ENCODE measurements at regions of chr9 and their contacts with region 1.

Region 1: DNA sequence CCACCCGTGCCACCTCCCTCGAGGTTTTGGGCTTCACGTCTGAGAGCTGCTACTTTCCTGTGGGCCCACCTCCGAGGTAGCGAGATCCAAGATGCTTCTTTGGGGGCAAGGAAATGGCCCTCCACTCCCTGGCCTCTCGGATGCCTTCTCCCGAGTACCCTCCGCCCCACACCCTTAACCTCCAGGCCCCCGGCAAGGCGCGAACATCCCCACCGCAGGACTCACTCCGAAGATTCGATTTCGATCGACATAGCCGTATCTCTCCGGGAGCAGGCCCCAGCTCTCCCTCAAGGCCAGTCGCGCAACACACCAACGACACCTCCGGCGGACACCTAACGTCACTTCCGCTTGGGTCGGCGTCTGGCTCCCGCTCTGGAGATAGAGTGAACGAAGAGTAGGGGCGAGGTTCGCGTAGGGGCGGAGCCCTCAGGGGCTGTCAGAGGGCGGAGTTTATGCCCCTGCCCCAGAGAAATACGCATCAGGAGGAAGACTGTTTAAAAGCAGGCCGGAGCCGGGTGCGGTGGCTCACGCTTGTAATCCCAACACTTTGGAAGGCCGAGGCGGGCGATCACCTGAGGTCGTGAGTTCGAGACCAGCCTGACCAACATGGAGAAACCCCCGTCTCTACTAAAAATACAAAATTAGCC is at the start of gene SMU1:
- DNase-seq: peak; percentile 69
- H3K4me3 ChIP-seq: peak within 1 kb of the TSS; percentile 98
- CTCF ChIP-seq: no peak

Region 2: DNA sequence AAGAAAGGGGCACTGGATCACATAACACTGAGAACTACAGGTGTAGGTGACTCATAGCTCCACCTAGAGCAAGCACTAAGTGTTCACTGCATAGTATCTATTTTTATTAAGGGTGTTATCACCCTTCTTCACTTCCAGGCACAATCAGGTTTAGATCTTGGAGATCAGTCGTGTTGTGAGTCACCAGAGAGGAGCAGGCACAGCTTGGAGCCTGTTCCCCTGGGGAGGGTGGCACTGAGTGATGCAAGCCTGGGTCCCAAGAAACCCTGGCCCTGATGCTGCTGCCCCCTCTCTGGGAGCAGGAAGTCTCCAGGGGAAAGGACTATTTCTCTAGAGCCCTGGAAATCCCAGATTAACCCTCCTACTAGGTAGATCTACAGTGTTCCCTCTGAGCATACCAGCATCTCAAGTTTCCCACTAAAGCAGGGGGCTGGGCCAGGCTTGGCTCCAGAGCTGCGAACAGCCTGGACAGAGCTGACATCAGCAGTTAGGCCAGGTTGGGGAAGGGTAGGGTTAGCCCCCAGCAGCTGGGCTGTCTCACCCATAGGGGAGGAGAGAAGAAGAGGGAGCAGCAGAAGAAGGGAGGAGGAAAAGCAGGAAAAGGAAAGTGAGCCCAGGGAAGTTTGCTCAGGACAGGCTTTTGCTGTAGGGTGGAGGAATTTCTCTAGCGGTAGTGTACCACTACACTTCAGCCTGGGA is 135.4 kb after region 1 on chr9:
- CTCF ChIA-PET with region 1: interaction called, 14 read pairs
- POLR2A ChIA-PET with region 1: no interaction called
- DNase-seq: no peak
- H3K4me3 ChIP-seq: no peak overlapping the region
- CTCF ChIP-seq: no peak

Region 3: DNA sequence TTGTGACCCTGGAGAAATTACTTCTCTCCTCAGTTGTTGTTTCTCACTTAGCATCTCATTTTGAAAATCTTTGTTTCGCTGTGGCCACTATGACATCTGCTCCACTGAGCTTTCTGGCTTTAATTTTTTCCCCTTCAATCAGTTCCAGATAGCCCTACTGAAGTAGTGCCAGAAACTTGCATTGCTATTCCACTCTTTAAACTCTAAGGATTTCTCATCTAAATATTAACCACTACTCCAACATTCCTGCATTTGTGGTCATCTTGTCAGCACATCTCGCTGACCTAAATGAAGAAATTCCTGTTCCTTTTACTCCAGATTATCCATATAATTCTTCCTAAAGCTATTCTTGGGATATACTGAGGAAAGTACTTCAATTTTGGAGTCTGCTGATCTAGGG is 412.6 kb after region 1 on chr9:
- CTCF ChIA-PET with region 1: no interaction called
- POLR2A ChIA-PET with region 1: no interaction called
- DNase-seq: peak; percentile 26
- H3K4me3 ChIP-seq: no peak overlapping the region
- CTCF ChIP-seq: no peak